ENCODE measurements at regions of chr3 and their contacts with region 1.

Region 1: GRCh38 chr3:101556064-101556463 is 5.6 kb upstream of the TRMT10C start:
- DNase-seq: no peak
- ATAC-seq: no peak
- H3K4me3 ChIP-seq: no peak overlapping the region
- H3K27ac ChIP-seq: no peak overlapping the region
- H3K4me1 ChIP-seq: peaks cover 0 to 3% (median 0%) of the 10 kb centered on the region in 12 donors
- H3K27me3 ChIP-seq: peaks cover 0 to 28% (median 0%) of the 10 kb centered on the region in 9 donors
- CTCF ChIP-seq: no peak
- POLR2A ChIP-seq: no peak

Region 2: GRCh38 chr3:101521211-101521701 is 34.8 kb before region 1 on chr3:
- intact Hi-C with region 1: loop called in 2 of 10 experiments (anchors 5 to 10 kb)
- DNase-seq: no peak
- ATAC-seq: no peak
- H3K4me3 ChIP-seq: no peak overlapping the region
- H3K27ac ChIP-seq: peak overlapping the region in 1 of 12 donors; percentile 46
- H3K4me1 ChIP-seq: peaks cover 0 to 13% (median 0%) of the 10 kb centered on the region in 12 donors
- H3K27me3 ChIP-seq: peaks cover 0 to 8% (median 0%) of the 10 kb centered on the region in 9 donors
- CTCF ChIP-seq: no peak
- POLR2A ChIP-seq: no peak

Region 3: DNA sequence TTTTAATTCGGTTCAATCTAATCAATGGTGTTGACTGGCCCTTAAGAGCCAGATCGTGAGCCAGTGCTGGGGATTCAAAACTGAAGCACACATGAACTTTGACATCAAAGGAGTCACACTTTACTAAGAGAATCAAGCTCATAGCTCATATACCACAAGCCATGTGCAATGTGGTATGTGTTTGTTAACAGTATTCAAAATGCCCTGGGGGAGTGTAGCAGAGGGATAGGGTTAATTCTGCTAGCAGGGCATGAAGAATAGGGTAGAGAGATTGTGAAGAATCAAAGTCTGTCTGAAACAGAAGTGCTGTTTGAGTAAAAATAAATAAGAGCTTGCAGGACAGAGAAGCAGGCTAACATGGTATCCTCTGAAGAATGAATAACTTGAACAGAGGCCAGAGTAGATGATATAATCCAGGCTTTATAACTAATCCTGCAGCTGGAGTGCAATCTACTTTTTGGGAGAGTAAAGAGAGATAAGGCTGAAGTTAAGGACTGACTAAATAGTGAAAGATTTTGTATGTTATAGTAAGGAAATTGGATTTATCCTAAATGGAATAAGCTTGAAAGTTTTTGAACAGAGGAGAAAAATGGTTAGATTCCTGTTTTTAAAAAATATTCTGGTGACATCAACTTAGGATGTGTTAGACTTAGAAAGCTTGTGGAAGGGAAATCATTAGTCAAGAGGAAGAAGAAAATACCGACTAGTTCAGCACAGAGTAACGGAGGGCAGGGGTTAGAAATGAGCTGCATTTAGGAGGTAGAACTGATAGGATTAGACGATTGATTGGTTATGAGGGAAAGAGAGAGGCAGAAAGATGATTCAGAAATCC is 585.2 kb after region 1 on chr3:
- intact Hi-C with region 1: no loop called
- DNase-seq: no peak
- ATAC-seq: peak; percentile 57 to 89 (median 65)
- H3K4me3 ChIP-seq: no peak overlapping the region
- H3K27ac ChIP-seq: peak overlapping the region; percentile 28 to 77 (median 53)
- H3K4me1 ChIP-seq: peaks cover 0 to 28% (median 12%) of the 10 kb centered on the region in 12 donors
- H3K27me3 ChIP-seq: no peaks in the 10 kb centered on the region
- CTCF ChIP-seq: no peak
- POLR2A ChIP-seq: no peak